A549 (cell line): ENCODE measurements at regions of chr2 and their contacts with region 1.

Region 1: GRCh38 chr2:237674731-237675276 is 47.4 kb downstream of the LRRFIP1 start:
- DNase-seq: no peak
- ATAC-seq: 0 out of 6 replicates have a peak, but pooled peaks of 1 of the 2 experiments have one; percentile 14
- H3K4me3 ChIP-seq: no peak overlapping the region
- H3K27ac ChIP-seq: no peak overlapping the region
- H3K4me1 ChIP-seq: peaks cover under 1% of the 10 kb centered on the region; the same call in 2 of the 3 replicates
- CTCF ChIP-seq: no peak
- EP300 ChIP-seq: no peak
- POLR2A ChIP-seq: no peak
- RAD21 ChIP-seq: no peak

Region 2: DNA sequence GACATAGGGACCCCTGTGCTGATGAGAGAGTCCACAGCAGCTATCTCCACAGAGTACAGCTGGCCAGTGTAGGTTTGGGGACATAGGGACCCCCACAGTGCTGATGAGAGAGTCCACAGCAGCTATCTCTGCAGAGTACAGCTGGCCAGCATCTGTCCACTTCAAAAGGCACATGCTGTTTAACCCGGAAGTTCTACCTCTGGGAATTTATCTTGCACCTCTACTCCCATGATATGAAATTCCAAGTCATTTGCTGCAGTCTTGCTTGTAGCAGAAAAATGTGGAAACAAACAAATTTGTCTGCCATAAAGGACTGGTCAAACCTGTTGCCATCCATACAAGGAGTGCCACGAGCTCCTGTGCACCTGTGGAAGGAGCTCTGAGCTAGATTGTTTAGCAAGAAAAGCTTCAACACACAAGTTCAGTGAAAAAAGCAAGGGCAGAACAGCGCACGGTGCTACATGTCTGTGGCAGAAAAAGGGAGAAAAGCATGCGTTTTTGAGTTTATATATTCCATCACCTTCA is 14.4 kb before region 1 on chr2:
- CTCF ChIA-PET with region 1: interaction called, 22 read pairs
- POLR2A ChIA-PET with region 1: no interaction called
- DNase-seq: no peak
- ATAC-seq: peak; percentile 27 to 41; a peak in 1 of 6 replicates
- H3K4me3 ChIP-seq: no peak overlapping the region
- H3K27ac ChIP-seq: no peak overlapping the region
- H3K4me1 ChIP-seq: no peaks in the 10 kb centered on the region
- CTCF ChIP-seq: no peak
- EP300 ChIP-seq: no peak
- POLR2A ChIP-seq: no peak
- RAD21 ChIP-seq: no peak

Region 3: DNA sequence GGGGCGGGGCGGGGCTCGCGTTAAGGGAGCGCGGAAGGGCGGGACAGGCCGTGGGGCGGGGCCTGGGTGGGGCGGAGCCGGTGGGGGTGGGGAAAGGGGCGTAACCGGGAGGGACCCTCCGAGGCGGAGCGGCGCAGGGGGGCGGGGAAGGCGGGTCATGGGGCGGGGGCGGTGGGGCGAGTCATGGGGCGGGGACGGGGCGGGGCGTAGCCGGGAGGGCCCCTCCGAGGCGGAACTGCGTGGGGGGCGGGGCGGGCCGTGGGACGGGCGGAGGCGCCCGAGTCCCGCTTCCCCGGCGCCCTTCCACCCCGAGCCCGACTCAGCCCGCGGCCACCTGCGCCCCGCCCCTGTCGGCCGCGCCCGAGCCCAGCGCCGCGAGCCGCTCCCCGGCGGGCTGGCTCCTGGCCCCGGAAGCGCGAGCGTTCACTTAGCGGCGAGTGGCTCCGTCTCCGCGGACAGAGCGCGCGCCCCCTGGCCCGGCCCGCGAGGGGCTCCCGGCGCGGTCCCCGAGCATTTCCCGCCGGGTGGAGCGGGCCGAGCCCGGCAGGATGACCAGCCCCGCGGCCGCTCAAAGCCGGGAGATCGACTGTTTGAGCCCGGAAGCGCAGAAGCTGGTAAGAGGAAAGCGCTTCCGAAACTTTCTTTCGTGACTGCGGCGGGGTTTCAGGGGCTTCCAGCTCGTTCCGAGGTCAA is 17.2 kb after region 1 on chr2:
- CTCF ChIA-PET with region 1: interaction called, 63 read pairs
- POLR2A ChIA-PET with region 1: interaction called, 3 read pairs
- DNase-seq: peak; percentile 68 to 93
- ATAC-seq: peak; percentile 69 to 74
- H3K4me3 ChIP-seq: peak overlapping the region; percentile 88
- H3K27ac ChIP-seq: peak overlapping the region; percentile 96 to 98
- H3K4me1 ChIP-seq: peaks cover 62% of the 10 kb centered on the region
- CTCF ChIP-seq: no peak
- EP300 ChIP-seq: no peak
- POLR2A ChIP-seq: peak; percentile 41
- RAD21 ChIP-seq: no peak

Region 4: DNA sequence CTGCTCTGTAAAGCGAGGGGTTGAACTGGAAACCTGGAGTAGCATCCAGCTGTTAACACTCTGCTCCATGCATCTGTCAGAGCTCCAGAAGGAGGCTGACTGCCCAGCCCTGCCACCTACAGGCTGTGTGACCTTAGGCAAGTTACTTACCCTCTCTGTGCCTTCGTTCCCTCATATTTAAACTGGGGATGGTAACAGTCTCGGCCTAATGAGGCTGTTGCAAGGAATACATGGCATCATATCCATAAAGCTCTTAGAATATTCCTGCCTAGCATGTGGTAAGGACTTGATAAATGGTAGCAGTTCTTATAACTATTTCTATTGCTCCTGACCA is 33.2 kb after region 1 on chr2:
- CTCF ChIA-PET with region 1: interaction called, 20 read pairs
- POLR2A ChIA-PET with region 1: no interaction called
- DNase-seq: no peak
- ATAC-seq: peak in 1 of 2 experiments; percentile 17; a peak in 1 of 6 replicates
- H3K4me3 ChIP-seq: no peak overlapping the region
- H3K27ac ChIP-seq: no peak overlapping the region
- H3K4me1 ChIP-seq: peaks cover 19% of the 10 kb centered on the region
- CTCF ChIP-seq: no peak
- EP300 ChIP-seq: no peak
- POLR2A ChIP-seq: no peak
- RAD21 ChIP-seq: no peak

Region 5: GRCh38 chr2:237731663-237732062 is 56.9 kb after region 1 on chr2:
- CTCF ChIA-PET with region 1: interaction called, 28 read pairs
- POLR2A ChIA-PET with region 1: no interaction called
- DNase-seq: peak; percentile 74 to 79
- ATAC-seq: peak; percentile 82 to 88
- H3K4me3 ChIP-seq: no peak overlapping the region
- H3K27ac ChIP-seq: peak overlapping the region; percentile 51 to 84
- H3K4me1 ChIP-seq: peaks cover 70% of the 10 kb centered on the region
- CTCF ChIP-seq: no peak
- EP300 ChIP-seq: no peak
- POLR2A ChIP-seq: no peak
- RAD21 ChIP-seq: no peak

Region 6: GRCh38 chr2:237774802-237775553 is 100.2 kb after region 1 on chr2:
- CTCF ChIA-PET with region 1: interaction called, 45 read pairs
- POLR2A ChIA-PET with region 1: no interaction called
- DNase-seq: peak; percentile 58 to 71
- ATAC-seq: peak; percentile 97 to 98
- H3K4me3 ChIP-seq: no peak overlapping the region
- H3K27ac ChIP-seq: no peak overlapping the region
- H3K4me1 ChIP-seq: peaks cover 3% of the 10 kb centered on the region; the same call in 1 of the 3 replicates
- CTCF ChIP-seq: peak; percentile 56
- EP300 ChIP-seq: no peak
- POLR2A ChIP-seq: no peak
- RAD21 ChIP-seq: peak; percentile 44 to 57

Region 7: GRCh38 chr2:238024986-238025385 is 350.2 kb after region 1 on chr2:
- CTCF ChIA-PET with region 1: no interaction called
- POLR2A ChIA-PET with region 1: no interaction called
- DNase-seq: no peak
- ATAC-seq: no peak
- H3K4me3 ChIP-seq: no peak overlapping the region
- H3K27ac ChIP-seq: no peak overlapping the region
- H3K4me1 ChIP-seq: 0 out of 3 replicates have a peak, but pooled peaks cover 7% of the 10 kb centered on the region
- CTCF ChIP-seq: no peak
- EP300 ChIP-seq: no peak
- POLR2A ChIP-seq: no peak
- RAD21 ChIP-seq: no peak